ENCODE measurements at regions of chrX and their contacts with region 1.

Region 1: DNA sequence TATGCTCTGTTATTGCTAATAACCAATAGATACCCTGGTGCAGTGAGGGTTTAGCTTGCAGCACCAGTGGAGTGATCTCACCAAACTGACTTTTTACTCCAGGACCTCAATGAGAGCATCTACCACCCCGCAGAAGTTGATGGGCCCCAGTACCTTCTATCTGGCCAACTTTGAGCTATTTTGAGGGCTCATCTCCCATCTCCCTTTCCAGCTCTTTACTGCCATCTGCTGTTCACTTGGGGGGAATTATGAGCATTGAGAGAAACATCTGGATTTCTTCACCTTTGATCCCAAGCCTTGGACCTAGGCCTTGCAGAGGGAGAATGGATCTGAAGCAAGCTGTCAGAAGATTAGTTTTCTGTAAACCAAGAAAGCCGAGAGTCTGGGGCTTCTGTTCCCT is 143.6 kb downstream of the TMEM164 start:
- H3K4me3 ChIP-seq: no peak overlapping the region
- H3K27ac ChIP-seq: no peak overlapping the region
- H3K4me1 ChIP-seq: no peaks in the 10 kb centered on the region
- CTCF ChIP-seq: 0 out of 2 replicates have a peak, but pooled peaks have one; percentile 8

Region 2: DNA sequence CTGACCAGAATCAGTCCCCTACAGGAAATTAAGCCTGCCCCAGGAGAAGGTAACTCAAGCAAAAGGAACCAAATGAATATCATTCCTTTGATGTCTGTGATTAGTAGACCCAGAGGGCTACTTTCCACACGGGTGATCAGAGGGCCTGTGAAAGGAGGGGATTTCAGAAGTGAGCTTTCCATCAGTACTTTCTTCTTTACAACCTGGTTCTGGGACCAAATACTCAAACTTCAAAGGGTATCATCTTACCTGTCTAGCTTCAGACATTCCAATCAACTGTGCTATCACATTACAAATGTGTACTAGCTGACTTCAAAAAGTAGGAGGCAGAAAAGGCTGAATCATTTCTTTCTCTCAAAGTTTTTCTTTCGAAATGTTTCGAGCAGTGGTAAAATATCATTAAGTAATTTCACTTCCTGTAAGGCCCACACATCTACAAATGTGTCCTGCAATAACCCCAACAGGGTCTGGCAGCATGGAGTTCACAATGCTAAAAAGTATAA is 437.3 kb before region 1 on chrX:
- CTCF ChIA-PET with region 1: interaction called, 11 read pairs
- POLR2A ChIA-PET with region 1: no interaction called
- H3K4me3 ChIP-seq: no peak overlapping the region
- H3K27ac ChIP-seq: no peak overlapping the region
- H3K4me1 ChIP-seq: peaks cover 3% of the 10 kb centered on the region; the same call in 1 of the 2 replicates
- CTCF ChIP-seq: no peak

Region 3: GRCh38 chrX:110046001-110046400 is 100.5 kb before region 1 on chrX:
- CTCF ChIA-PET with region 1: interaction called, 13 read pairs
- POLR2A ChIA-PET with region 1: no interaction called
- H3K4me3 ChIP-seq: no peak overlapping the region
- H3K27ac ChIP-seq: no peak overlapping the region
- H3K4me1 ChIP-seq: no peaks in the 10 kb centered on the region
- CTCF ChIP-seq: no peak

Region 4: DNA sequence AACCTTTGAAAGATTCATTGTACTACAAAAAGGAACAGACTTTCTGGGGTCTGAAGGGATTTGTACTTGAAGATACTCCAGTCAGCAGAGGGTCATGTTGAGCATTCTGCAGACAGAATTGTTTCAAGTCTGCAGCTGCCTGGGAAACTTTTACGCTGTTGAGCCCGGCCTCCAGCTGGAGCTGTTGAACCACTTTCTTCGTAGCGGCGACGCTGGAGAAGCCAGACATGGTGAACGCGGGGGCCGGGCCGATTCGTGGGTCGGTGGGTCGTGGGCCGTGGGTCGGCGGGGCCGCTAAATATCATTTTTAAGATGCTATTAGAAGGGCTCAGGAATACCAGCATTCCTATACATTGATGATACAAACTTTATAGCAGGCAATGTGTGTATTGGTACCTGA is 200.2 kb after region 1 on chrX:
- CTCF ChIA-PET with region 1: no interaction called
- POLR2A ChIA-PET with region 1: no interaction called
- H3K4me3 ChIP-seq: no peak overlapping the region
- H3K27ac ChIP-seq: no peak overlapping the region
- H3K4me1 ChIP-seq: no peaks in the 10 kb centered on the region
- CTCF ChIP-seq: no peak

Region 5: DNA sequence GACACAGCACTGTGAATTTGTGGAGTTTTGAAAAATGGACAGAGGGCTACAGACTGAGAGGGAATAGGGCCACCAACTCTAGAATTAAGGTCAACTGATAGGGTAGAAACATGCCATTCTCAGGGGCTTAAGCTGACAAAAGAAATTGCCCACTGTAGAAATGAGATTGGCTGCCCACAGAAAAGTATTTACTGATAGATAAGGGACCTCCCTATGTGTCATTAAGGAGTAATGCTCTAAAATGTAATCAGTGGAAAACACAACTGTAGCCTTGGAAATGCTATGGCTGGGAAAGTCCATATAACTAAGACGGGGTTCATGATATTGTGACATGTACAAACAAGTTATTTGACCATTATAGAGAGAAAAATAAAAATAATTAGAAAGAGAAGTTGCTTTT is 216.7 kb after region 1 on chrX:
- CTCF ChIA-PET with region 1: no interaction called
- POLR2A ChIA-PET with region 1: no interaction called
- H3K4me3 ChIP-seq: no peak overlapping the region
- H3K27ac ChIP-seq: no peak overlapping the region
- H3K4me1 ChIP-seq: no peaks in the 10 kb centered on the region
- CTCF ChIP-seq: no peak

Region 6: DNA sequence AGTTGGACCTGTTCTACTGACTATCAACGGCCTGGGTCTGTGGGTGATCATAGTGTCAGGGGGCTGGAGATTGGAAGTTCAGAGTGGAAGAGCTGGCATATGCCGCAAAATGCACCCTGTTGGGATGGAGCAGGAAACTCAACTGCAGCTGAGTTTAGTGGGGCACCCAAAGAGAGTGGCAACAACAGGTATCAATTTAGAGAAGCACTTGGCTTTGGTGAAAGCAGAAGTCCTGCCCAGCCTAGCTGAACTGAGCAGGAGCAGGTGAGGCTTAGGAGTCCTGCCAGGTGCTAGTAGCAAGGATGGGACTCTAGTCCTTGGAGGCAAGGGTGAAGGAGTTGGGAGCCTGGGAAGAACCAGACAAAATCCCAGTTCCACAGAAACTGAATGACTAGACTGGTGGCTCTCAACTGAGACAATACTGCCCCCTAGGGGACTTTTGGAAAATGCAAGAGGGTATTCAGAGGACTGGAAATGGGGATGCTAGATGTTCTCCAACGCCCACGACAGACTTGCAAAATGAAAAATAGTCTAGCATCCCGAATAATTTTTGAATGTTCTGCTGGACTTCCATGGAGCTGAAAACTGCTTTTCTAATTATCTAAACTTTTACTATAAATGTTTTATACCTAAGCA is 261.5 kb after region 1 on chrX:
- CTCF ChIA-PET with region 1: interaction called, 576 read pairs
- POLR2A ChIA-PET with region 1: no interaction called
- H3K4me3 ChIP-seq: no peak overlapping the region
- H3K27ac ChIP-seq: no peak overlapping the region
- H3K4me1 ChIP-seq: no peaks in the 10 kb centered on the region
- CTCF ChIP-seq: no peak

Region 7: DNA sequence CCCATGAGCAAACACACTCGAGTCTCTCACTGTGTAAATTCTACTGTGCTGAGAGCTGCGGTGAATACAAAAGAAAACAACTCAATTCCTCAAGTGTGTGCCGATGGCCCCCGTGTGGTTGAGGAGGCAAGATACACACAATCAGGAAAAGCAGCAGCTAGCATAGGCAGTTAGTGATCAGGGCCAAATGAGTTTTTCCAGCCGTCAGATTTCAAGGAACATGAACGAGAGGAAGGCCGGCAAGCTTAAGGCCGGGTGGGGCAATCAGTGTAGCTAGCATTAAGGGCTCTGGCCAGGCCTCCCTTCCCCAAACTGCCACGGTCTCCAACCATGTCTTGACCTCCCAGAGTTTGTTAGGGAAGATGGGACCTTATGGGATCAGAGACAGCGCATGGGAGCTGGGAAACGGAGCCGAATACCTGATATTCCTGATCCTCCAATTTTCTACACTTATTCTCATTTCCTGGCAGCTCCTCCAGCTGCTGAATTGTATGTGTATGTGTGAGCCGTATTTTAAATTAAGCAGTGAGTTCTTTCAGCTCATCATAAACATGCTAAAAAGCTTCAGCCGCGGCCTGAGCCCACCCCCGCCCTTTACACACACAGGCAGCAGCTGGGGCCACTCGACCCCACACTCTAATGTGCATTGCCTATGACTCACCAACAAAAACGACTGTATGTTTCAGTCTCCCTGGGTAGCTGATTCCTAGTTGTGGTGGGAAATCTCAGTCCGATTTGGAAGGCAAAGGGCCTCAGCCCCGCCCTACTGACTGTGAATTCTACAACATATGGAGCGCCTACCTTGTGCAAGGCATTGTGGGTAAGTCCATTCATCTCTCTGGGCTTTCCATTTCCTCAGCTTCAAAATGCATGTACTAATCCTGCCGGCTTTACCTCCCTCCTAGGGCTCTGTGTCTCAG is 272.1 kb after region 1 on chrX:
- CTCF ChIA-PET with region 1: interaction called, 576 read pairs
- POLR2A ChIA-PET with region 1: no interaction called
- H3K4me3 ChIP-seq: no peak overlapping the region
- H3K27ac ChIP-seq: peak overlapping the region; percentile 4; the same call in 1 of the 2 replicates
- H3K4me1 ChIP-seq: no peaks in the 10 kb centered on the region
- CTCF ChIP-seq: peak; percentile 24; the same call in 1 of the 2 replicates